Activated CD8-positive, alpha-beta T cell treated with anti-CD3 and anti-CD28 coated beads for 36 hours (primary cell): ENCODE measurements at regions of chr1 and their contacts with region 1.

Region 1: DNA sequence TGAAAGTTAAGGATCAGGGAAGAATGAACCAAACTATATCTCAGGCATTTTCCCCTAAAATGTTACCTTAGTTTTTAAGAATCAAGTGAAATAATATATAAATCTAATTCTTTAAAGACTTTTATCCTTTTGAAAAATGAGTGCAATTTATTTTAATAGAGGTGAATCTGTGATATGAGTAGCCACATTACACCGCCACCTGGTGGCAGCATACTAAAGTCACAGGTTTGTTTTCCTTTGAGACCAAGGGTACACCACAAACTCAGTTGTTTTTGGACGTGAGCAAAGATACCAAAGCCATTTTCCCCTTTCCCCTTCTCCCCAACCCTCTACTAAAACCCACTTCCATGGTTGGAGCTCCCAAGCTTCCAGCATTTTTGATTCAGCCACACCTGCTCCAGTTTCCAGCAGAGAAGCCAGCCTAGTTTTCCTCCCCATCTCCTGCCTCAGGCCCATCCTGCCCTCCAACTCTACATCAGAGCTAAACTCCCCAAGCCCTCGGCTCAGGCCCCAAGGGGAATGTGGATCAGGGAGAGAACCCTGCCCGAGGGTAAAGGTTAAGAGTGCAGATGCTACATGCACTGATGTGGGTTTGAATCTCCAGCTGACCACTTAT is 22.9 kb upstream of the LDLRAP1 start:
- DNase-seq: peak; percentile 87
- ATAC-seq: peak; percentile 69
- H3K4me3 Mint-ChIP-seq: no peak overlapping the region
- H3K27ac Mint-ChIP-seq: no peak overlapping the region
- H3K4me1 Mint-ChIP-seq: peaks cover 4% of the 10 kb centered on the region
- H3K27me3 Mint-ChIP-seq: no peaks in the 10 kb centered on the region
- CTCF ChIP-seq: peak; percentile 88

Region 2: DNA sequence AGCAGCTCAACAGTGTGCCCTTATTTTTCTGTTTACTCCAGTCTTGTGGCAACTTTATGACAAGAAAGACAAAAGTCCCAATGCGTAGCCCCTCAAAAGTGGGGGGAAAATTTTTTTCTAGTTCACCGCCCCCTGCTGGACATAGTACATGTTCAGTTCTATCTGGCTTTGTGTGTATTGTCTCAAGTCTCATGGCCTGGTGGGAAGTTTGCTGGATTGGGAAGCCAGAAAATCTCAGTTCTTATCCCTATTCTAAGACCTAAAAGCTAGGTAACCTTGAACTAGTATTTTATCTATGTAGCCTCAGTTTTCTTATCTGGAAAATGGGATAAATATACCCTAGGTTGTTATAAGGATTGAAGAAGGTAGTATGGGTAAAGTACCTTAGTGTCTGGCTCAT is 32.9 kb before region 1 on chr1:
- CTCF ChIA-PET with region 1: interaction called, 19 read pairs
- POLR2A ChIA-PET with region 1: no interaction called
- intact Hi-C with region 1: no loop called
- DNase-seq: peak; percentile 58
- ATAC-seq: no peak
- H3K4me3 Mint-ChIP-seq: no peak overlapping the region
- H3K27ac Mint-ChIP-seq: no peak overlapping the region
- H3K4me1 Mint-ChIP-seq: peaks cover 8% of the 10 kb centered on the region
- H3K27me3 Mint-ChIP-seq: no peaks in the 10 kb centered on the region
- CTCF ChIP-seq: peak; percentile 60

Region 3: DNA sequence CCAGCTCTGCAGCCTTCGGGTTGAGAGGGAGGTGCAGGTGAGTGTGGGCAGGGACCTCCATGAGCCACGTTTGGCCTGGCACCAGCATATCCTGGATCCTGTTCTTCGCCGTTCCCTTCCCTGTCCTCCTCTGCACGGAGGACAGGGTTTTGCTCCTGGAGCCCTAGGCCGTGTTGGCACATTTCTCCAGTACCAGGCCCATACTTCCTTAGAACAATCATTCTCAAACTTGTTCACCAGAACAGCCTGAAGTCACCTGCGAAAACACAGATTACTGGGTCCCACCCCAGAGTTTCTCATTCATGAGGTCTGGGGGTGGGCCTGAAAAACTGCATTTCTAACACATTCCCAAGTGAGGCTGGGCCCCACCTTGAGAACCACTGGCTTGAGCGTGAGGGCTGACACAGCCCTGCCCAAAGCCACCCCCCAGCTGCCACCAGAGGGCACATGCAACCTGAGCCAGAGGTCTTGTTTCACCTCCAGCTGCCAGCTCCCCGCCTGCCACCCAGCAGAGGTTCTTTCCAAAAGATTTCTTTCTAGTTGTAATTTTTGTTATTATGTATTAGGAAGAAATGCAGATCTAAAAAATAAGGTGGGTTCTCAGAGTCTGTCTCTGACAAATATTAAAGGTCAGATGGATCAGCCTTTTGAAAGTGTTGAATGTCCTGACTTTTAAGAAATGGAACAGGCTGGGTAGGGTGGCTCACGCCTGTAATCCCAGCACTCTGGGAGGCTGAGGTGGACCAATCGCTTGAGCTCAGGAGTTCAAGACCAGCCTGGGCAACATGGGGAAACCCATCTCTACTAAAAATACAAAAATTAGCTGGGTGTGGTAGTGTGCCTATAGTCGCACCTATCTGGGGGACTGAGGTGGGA is 16.8 kb before region 1 on chr1:
- CTCF ChIA-PET with region 1: interaction called, 77 read pairs
- POLR2A ChIA-PET with region 1: interaction called, 3 read pairs
- intact Hi-C with region 1: no loop called
- DNase-seq: peak; percentile 82
- ATAC-seq: peak; percentile 92
- H3K4me3 Mint-ChIP-seq: no peak overlapping the region
- H3K27ac Mint-ChIP-seq: no peak overlapping the region
- H3K4me1 Mint-ChIP-seq: peaks cover 14% of the 10 kb centered on the region
- H3K27me3 Mint-ChIP-seq: no peaks in the 10 kb centered on the region
- CTCF ChIP-seq: peak; percentile 77

Region 4: GRCh38 chr1:25538191-25538761 is 17.7 kb after region 1 on chr1:
- CTCF ChIA-PET with region 1: interaction called, 20 read pairs
- POLR2A ChIA-PET with region 1: interaction called, 3 read pairs
- intact Hi-C with region 1: no loop called
- DNase-seq: no peak
- ATAC-seq: no peak
- H3K4me3 Mint-ChIP-seq: no peak overlapping the region
- H3K27ac Mint-ChIP-seq: no peak overlapping the region
- H3K4me1 Mint-ChIP-seq: peaks cover 7% of the 10 kb centered on the region
- H3K27me3 Mint-ChIP-seq: no peaks in the 10 kb centered on the region
- CTCF ChIP-seq: no peak

Region 5: DNA sequence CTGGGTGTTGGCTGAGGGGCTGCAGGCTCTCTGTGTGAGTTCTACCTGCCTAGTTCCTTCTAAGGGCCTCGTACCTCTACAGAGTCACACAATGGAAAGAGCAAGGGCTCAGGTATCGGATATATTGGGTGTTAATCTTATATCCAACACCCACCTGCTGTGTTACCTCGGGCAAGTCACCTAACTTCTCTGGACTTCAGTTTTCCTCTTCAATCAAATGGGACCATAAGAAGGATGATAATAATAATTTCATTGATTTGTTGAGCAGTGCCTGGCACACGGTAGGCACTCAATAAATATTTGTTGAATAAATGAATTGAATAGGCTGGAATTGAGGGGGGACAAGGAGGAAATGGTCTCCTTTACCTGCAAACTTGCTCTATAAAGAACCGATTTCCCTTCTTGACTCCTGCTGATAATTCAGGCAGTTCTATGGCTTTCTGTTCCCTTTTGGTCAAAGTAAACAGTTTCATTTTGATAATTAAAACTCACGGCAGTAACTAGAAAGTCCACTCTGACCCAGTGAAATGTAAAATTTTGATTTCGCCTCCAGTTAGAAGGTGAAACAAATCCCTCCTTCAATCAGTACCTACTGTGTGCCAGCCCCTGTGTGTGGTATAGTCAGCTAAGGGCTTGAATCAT is 79.5 kb after region 1 on chr1:
- CTCF ChIA-PET with region 1: interaction called, 14 read pairs
- POLR2A ChIA-PET with region 1: no interaction called
- intact Hi-C with region 1: no loop called
- DNase-seq: no peak
- ATAC-seq: no peak
- H3K4me3 Mint-ChIP-seq: no peak overlapping the region
- H3K27ac Mint-ChIP-seq: no peak overlapping the region
- H3K4me1 Mint-ChIP-seq: no peaks in the 10 kb centered on the region
- H3K27me3 Mint-ChIP-seq: no peaks in the 10 kb centered on the region
- CTCF ChIP-seq: no peak

Region 6: DNA sequence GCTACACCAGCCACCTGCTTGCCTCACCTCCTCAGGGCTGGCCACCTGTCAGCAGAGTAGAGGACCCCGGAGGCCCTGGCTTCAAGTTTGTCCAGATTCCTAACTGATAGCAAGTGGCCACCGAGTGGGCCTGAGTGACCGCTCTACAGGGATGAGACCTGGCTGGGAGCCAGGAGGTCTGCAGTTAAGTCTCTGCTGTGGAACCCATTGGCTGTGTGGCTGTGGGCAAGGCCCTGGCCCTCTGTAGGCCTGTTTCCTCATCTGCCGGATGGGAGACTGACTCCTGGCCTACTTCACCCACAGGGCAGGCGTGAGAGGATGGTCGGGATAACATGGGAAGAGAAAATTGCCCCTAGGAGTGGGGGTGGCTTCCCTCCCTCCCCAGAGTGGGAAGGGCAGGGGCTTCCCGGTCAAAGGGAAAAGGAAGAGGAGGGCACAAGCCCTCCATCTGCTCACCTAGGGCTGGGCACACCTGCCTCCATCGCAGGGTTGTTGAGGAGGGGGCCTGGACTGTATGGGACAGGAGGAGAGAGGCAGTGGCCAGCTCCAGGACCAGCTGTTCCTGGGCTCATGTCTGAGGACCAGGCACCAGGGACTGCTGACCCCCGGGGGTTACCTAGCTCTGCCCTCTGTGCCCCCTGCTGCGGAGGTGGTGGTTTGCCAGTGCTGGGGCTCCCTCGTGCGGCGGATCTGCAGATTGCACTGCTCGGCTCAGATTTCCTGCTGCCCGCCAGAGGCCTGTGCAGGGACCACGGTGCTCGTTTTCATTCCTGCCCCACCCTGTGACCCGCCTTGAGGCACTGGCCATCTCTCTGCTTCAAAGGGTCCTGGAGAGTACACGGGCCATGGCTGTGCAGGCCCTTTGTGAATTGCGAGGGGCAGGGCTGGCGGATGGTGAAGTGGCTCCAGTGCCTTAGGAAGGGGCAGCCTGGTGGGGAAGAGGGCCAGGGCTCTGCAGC is 290.1 kb after region 1 on chr1:
- CTCF ChIA-PET with region 1: interaction called, 14 read pairs
- POLR2A ChIA-PET with region 1: no interaction called
- intact Hi-C with region 1: no loop called
- DNase-seq: peak; percentile 89
- ATAC-seq: peak; percentile 95
- H3K4me3 Mint-ChIP-seq: no peak overlapping the region
- H3K27ac Mint-ChIP-seq: no peak overlapping the region
- H3K4me1 Mint-ChIP-seq: no peaks in the 10 kb centered on the region
- H3K27me3 Mint-ChIP-seq: no peaks in the 10 kb centered on the region
- CTCF ChIP-seq: peak; percentile 99